Activated T-helper 1 cell treated with anti-CD3 and anti-CD28 coated beads, Interleukin-12 subunit alpha, Interleukin-12 subunit beta, Interleukin-2, Interleukin-4 antibody, amounts not matched to agents 30 ng/mL and 10 ng/mL and 1 ng/mL, durations not matched to agents 14 hours and 24 hours and 36 hours (primary cell): ENCODE measurements at regions of chr5 and their contacts with region 1.

Region 1: DNA sequence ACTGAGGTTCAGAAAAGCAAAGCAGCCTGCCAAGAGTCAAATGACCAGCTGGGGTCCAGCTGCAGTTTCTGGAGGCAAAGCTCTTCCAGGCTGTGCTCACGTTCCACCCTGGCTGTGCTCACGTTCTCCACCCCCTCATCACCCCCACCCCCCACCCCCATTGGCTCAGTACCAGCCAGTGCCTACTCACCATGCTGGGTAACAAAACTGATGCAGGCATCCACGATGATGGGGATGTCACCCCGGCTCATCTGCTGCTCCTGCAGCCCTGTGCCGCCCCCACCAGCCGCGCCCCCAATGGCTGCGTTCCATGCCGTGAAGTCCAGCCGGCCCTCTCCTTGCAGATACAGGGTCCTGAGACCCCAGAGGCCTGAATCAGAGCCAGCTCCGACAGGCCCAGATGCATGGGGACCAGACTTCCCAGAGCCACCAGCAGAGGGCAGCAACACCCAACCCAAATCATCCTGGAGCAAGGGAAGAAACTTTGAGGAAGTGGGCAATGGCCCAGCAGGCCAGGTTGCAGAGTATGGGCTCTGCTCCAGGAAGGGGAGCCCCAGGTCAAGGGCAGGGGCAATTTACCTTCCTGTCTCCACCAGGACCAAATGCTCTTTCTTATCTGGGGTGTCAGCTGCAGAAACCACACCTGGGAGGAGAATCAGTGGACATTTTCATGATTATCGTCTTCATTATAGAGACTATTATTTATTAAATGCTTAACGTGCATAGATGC is 13.7 kb upstream of the FCHSD1 start:
- DNase-seq: peak; percentile 59
- H3K4me3 Mint-ChIP-seq: no peak overlapping the region
- H3K27ac Mint-ChIP-seq: no peak overlapping the region
- H3K4me1 Mint-ChIP-seq: no peaks in the 10 kb centered on the region
- H3K27me3 Mint-ChIP-seq: peaks cover 2% of the 10 kb centered on the region

Region 2: GRCh38 chr5:141597394-141597793 is 67.5 kb before region 1 on chr5:
- intact Hi-C with region 1: loop called (anchors 1 kb)
- DNase-seq: no peak
- H3K4me3 Mint-ChIP-seq: no peak overlapping the region
- H3K27ac Mint-ChIP-seq: peak overlapping the region; percentile 5
- H3K4me1 Mint-ChIP-seq: peaks cover 66% of the 10 kb centered on the region
- H3K27me3 Mint-ChIP-seq: no peaks in the 10 kb centered on the region

Region 3: GRCh38 chr5:141681695-141682641 is 17.1 kb after region 1 on chr5 and contains the start of gene ARAP3:
- intact Hi-C with region 1: loop called (anchors 1 kb)
- DNase-seq: peak; percentile 22
- H3K4me3 Mint-ChIP-seq: peak within 1 kb of the TSS; percentile 72
- H3K27ac Mint-ChIP-seq: peak within 1 kb of the TSS; percentile 71
- H3K4me1 Mint-ChIP-seq: peaks cover 23% of the 10 kb centered on the region
- H3K27me3 Mint-ChIP-seq: peaks cover 1% of the 10 kb centered on the region
- total RNA-seq, gene ARAP3: 7.1 and 7.2 TPM in 2 replicates

Region 4: GRCh38 chr5:141813789-141814602 is 149.1 kb after region 1 on chr5:
- intact Hi-C with region 1: loop called (anchors 1 kb)
- DNase-seq: peak; percentile 11
- H3K4me3 Mint-ChIP-seq: no peak overlapping the region
- H3K27ac Mint-ChIP-seq: no peak overlapping the region
- H3K4me1 Mint-ChIP-seq: no peaks in the 10 kb centered on the region
- H3K27me3 Mint-ChIP-seq: peaks cover 38% of the 10 kb centered on the region

Region 5: GRCh38 chr5:141825791-141826560 is 161.1 kb after region 1 on chr5:
- intact Hi-C with region 1: loop called (anchors 1 kb)
- DNase-seq: no peak
- H3K4me3 Mint-ChIP-seq: no peak overlapping the region
- H3K27ac Mint-ChIP-seq: no peak overlapping the region
- H3K4me1 Mint-ChIP-seq: no peaks in the 10 kb centered on the region
- H3K27me3 Mint-ChIP-seq: peaks cover 21% of the 10 kb centered on the region

Region 6: DNA sequence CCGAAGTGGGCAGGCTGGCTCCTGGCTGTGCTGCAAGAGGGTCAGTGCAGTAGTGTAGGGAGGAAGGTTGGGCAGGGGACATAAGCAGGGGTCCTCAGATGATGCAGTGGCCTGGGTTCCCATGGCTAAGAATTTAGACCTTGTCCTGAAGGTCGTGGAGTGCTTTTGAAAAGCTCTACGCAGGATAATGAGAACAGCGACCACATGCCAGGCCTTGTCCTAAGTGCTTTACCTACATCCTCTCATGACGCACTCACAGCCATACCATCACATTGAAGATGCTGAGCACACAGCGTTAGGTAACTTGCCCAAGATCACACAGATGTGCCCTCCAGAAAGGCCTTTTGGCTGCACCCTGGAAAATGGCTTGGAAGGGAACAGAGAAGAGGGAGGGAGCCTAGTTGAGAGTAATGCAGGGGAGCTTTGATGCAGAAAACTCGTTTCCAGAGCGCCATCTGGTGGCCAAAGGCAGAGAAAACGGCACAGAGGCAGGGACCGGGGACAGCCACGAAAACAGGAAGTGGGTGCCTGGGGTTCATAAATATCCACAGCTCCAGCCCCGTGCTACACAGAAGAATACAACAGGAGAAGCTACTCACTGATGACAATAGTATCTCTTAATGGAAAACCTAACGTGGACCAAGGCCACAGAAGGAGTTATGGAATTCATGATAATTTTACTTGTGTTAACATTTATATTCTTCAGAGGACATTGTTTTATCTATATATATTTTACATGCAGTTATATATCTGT is 295.7 kb after region 1 on chr5:
- intact Hi-C with region 1: loop called (anchors 1 kb)
- DNase-seq: peak; percentile 82
- H3K4me3 Mint-ChIP-seq: peak overlapping the region; percentile 24
- H3K27ac Mint-ChIP-seq: peak overlapping the region; percentile 76
- H3K4me1 Mint-ChIP-seq: peaks cover 42% of the 10 kb centered on the region
- H3K27me3 Mint-ChIP-seq: no peaks in the 10 kb centered on the region